ENCODE measurements at regions of chr9 and their contacts with region 1.

Region 1: DNA sequence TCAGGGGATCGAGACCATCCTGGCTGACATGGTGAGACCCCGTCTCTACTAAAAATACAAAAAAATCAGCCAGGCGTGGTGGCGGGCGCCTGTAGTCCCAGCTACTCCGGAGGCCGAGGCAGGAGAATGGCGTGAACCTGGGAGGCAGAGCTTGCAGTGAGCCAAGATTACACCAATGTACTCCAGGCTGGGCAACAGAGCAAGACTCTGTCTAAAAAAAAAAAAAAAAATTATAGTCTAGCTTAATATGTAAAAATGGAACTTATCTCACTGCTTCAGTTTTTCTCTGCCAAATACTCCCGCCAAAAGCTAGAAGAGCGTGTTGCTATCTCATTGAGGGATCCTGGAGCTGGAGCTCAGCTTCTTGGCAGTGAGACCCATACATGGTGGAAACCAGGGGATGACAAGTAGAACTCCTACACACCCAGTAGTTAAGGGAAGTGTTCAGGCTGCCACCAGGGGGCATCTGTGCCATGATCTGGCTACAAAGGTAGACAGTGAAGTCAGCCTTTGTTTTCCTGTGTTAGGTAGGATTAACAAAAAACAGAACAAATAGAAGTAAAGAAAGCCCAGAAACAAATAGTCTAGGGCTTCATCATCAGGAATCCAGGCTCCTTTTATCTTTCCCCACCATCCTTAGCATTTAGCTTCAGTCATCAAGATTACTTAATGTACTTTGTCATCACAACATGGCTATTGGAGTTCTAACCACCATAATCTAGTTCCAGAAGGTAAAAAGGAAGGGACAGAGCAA is 33.6 kb upstream of the GLIPR2 start:
- H3K4me3 ChIP-seq: no peak overlapping the region
- H3K27ac ChIP-seq: no peak overlapping the region
- H3K4me1 ChIP-seq: no peaks in the 10 kb centered on the region
- CTCF ChIP-seq: no peak

Region 2: GRCh38 chr9:35835216-35835632 is 267.7 kb before region 1 on chr9:
- CTCF ChIA-PET with region 1: no interaction called
- POLR2A ChIA-PET with region 1: no interaction called
- H3K4me3 ChIP-seq: no peak overlapping the region
- H3K27ac ChIP-seq: no peak overlapping the region
- H3K4me1 ChIP-seq: no peaks in the 10 kb centered on the region; the same call in 1 of the 2 replicates
- CTCF ChIP-seq: no peak

Region 3: GRCh38 chr9:36008774-36009300 is 94.1 kb before region 1 on chr9:
- CTCF ChIA-PET with region 1: interaction called, 10 read pairs
- POLR2A ChIA-PET with region 1: no interaction called
- H3K4me3 ChIP-seq: no peak overlapping the region
- H3K27ac ChIP-seq: no peak overlapping the region
- H3K4me1 ChIP-seq: no peaks in the 10 kb centered on the region
- CTCF ChIP-seq: 0 out of 2 replicates have a peak, but pooled peaks have one; percentile 16

Region 4: GRCh38 chr9:36080519-36080918 is 22.4 kb before region 1 on chr9:
- CTCF ChIA-PET with region 1: interaction called, 14 read pairs
- POLR2A ChIA-PET with region 1: no interaction called
- H3K4me3 ChIP-seq: no peak overlapping the region
- H3K27ac ChIP-seq: no peak overlapping the region
- H3K4me1 ChIP-seq: no peaks in the 10 kb centered on the region
- CTCF ChIP-seq: no peak

Region 5: GRCh38 chr9:36118706-36119105 is 15.8 kb after region 1 on chr9:
- CTCF ChIA-PET with region 1: interaction called, 28 read pairs
- POLR2A ChIA-PET with region 1: interaction called, 3 read pairs
- H3K4me3 ChIP-seq: no peak overlapping the region
- H3K27ac ChIP-seq: no peak overlapping the region
- H3K4me1 ChIP-seq: no peaks in the 10 kb centered on the region
- CTCF ChIP-seq: no peak

Region 6: DNA sequence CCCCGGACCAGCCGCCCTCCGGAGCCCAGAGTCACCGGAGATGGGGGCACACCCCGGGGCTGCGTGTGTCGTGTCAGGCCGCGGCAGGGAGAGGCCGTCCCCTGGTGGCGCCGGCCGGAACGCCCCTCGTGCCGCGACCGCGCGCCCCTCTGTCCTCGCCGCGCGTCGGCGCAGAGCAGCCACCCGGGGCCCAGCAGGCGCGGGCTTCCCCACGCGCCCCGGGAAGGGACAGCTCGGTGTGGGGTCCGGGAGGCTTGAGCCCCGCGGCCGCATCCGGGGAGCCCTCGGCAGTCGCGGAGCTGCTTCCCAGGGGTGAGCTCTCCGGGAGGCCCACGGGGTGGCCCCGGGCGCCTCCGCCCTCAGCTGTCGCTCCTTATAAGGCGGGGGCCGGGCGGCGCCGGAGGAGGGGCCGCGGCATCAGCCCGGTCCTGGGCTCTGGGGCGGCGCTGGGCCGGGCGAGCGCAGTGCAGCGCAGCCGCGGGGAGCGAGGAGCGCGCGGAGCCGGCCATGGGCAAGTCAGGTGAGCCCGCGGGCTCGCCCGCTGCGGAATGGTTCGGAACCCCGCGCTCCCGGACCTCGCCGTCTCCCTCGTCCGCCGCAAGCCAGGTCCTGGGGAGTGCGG is 33.5 kb after region 1 on chr9 and contains the start of gene GLIPR2:
- CTCF ChIA-PET with region 1: interaction called, 7 read pairs
- POLR2A ChIA-PET with region 1: interaction called, 10 read pairs
- H3K4me3 ChIP-seq: peak within 1 kb of the TSS; percentile 62
- H3K27ac ChIP-seq: peak within 1 kb of the TSS; percentile 56; the same call in 1 of the 2 replicates
- H3K4me1 ChIP-seq: no peaks in the 10 kb centered on the region
- CTCF ChIP-seq: peak; percentile 40; the same call in 1 of the 2 replicates